ENCODE measurements at regions of chr4 and their contacts with region 1.

Region 1: DNA sequence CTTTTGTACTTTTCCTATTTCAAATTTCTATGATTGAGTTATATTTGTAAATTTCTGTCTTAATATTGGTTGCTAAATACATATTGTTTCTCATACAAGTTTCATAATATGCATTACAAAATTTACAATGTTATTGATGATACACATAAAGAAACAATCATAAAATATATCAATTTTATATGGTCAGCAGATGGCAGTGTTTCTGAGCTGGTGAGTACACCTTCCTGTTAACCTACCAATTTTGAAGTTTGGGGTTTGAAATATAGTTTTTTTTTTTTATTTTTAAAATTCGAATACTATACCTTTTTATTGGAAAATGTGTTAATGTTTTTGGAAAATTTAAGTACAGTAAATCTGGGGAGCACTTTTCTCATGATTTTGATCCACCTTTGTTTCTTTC is 1953.1 kb upstream of the ADGRL3 start:
- DNase-seq: peak; percentile 0
- H3K4me3 ChIP-seq: no peak overlapping the region
- H3K27ac ChIP-seq: no peak overlapping the region
- H3K4me1 ChIP-seq: no peaks in the 10 kb centered on the region
- CTCF ChIP-seq: peak; percentile 73

Region 2: DNA sequence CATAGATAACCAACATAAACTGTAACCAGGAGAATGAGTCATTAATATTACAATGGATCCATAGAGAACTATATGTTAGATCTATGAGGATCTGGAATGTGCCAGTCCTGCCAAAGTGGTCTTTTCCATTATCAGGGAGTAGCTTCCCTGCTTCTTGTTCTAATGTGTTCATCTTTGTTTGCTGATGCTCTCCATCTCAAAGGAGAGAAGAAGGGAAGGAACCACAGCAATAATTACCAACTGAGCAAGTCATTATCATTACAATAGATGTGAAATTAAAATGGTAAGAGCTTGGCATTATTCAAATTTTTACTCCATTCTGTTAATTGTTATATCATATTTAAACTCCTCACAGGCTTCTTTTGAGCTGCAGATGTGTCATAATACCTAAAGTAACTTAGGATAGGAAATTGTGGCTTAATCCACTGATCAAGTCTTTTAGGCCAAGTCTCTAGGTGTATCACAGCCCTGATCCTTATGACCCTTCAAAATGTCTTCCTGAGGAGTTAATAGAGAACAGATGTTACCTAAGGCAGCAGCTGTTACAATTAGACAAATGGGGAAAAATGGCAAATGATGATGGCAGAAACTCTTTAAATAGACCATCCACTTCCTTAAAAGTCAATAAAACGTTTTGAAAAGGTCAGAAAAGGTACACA is 644.2 kb before region 1 on chr4:
- CTCF ChIA-PET with region 1: no interaction called
- POLR2A ChIA-PET with region 1: no interaction called
- intact Hi-C with region 1: no loop called
- DNase-seq: no peak
- H3K4me3 ChIP-seq: no peak overlapping the region
- H3K27ac ChIP-seq: no peak overlapping the region
- H3K4me1 ChIP-seq: no peaks in the 10 kb centered on the region
- CTCF ChIP-seq: no peak

Region 3: GRCh38 chr4:60201057-60201673 is 954.1 kb after region 1 on chr4:
- CTCF ChIA-PET with region 1: no interaction called
- POLR2A ChIA-PET with region 1: no interaction called
- intact Hi-C with region 1: loop called (anchors 5 kb)
- DNase-seq: peak; percentile 55
- H3K4me3 ChIP-seq: no peak overlapping the region
- H3K27ac ChIP-seq: no peak overlapping the region
- H3K4me1 ChIP-seq: no peaks in the 10 kb centered on the region
- CTCF ChIP-seq: peak; percentile 96

Measured in OCI-LY7 (cell line).